GM12878 (cell line): ENCODE measurements at regions of chr2 and their contacts with region 1.

Region 1: GRCh38 chr2:181667234-181667633 is 10.3 kb upstream of the CERKL start:
- DNase-seq: no peak
- ATAC-seq: no peak
- H3K4me3 ChIP-seq: no peak overlapping the region
- H3K27ac ChIP-seq: no peak overlapping the region
- H3K4me1 ChIP-seq: peaks cover 2% of the 10 kb centered on the region
- H3K27me3 ChIP-seq: no peaks in the 10 kb centered on the region
- CTCF ChIP-seq: no peak
- EP300 ChIP-seq: no peak
- POLR2A ChIP-seq: no peak
- RAD21 ChIP-seq: no peak

Region 2: GRCh38 chr2:181552808-181553207 is 114.4 kb before region 1 on chr2:
- CTCF ChIA-PET with region 1: no interaction called
- POLR2A ChIA-PET with region 1: no interaction called
- RAD21 ChIA-PET with region 1: no interaction called
- SMC1A ChIA-PET with region 1: no interaction called
- in situ Hi-C with region 1: no loop called
- intact Hi-C with region 1: no loop called
- DNase-seq: no peak
- ATAC-seq: no peak
- H3K4me3 ChIP-seq: no peak overlapping the region
- H3K27ac ChIP-seq: no peak overlapping the region
- H3K4me1 ChIP-seq: no peaks in the 10 kb centered on the region
- H3K27me3 ChIP-seq: no peaks in the 10 kb centered on the region
- CTCF ChIP-seq: no peak
- EP300 ChIP-seq: no peak
- POLR2A ChIP-seq: no peak
- RAD21 ChIP-seq: no peak

Region 3: DNA sequence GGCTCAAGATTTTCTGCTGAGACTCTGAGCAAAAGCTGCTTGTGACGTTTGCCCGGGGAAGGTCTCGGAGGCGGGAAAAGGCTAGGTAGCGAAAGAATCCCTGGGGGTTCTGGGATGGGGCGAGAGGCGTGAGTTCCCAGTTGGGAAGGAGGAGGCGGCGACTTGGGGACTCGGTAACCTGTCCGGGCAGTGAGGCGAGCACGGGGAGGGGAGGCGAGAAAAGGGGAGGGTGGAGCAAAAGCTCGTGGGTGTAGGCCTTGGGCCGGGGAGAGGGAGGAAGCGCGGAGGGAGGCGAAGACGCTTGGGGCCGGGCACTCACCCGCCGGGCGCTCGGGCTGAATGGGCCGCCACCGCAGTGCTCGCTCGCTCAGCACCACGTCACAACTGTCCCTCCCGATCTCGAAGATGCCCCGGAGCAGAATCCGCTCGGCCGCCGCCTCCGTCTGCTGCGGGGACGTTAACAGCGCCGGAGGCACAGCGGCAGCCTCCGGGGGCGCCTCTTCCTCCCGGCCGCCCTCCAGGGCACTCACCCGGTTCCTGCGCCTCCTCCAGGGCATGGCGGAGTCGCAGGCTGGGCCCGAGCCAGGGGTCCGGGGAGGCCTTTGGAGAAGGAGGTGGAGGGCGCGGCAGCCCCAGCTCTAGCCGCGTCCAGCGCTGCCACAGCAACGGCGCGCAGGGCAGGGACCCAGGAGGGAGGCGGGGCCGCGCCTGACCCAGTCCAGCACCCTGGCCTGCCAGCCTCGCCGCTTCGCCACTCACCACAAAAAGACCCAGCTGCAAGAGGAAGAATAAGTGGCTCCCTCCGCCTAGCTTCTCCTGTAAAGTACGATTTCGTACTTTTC is 10.6 kb before region 1 on chr2 and contains the start of gene CERKL:
- CTCF ChIA-PET with region 1: interaction called, 11 read pairs
- POLR2A ChIA-PET with region 1: no interaction called
- RAD21 ChIA-PET with region 1: no interaction called
- SMC1A ChIA-PET with region 1: interaction called, 11 read pairs
- in situ Hi-C with region 1: no loop called
- intact Hi-C with region 1: no loop called
- DNase-seq: no peak
- ATAC-seq: peak; percentile 85
- H3K4me3 ChIP-seq: peak within 1 kb of the TSS; percentile 55
- H3K27ac ChIP-seq: no peak within 1 kb of the TSS
- H3K4me1 ChIP-seq: no peaks in the 10 kb centered on the region
- H3K27me3 ChIP-seq: peaks cover 9 to 12% of the 10 kb centered on the region in 2 experiments; a peak in 3 of 4 replicates
- CTCF ChIP-seq: no peak
- EP300 ChIP-seq: no peak
- POLR2A ChIP-seq: no peak
- RAD21 ChIP-seq: no peak
- polyA plus RNA-seq, gene CERKL: 19.1 to 23.0 TPM

Region 4: GRCh38 chr2:181682795-181683517 is 15.7 kb after region 1 on chr2:
- CTCF ChIA-PET with region 1: no interaction called
- POLR2A ChIA-PET with region 1: no interaction called
- RAD21 ChIA-PET with region 1: no interaction called
- SMC1A ChIA-PET with region 1: no interaction called
- in situ Hi-C with region 1: no loop called
- intact Hi-C with region 1: no loop called
- DNase-seq: no peak
- ATAC-seq: no peak
- H3K4me3 ChIP-seq: no peak overlapping the region
- H3K27ac ChIP-seq: no peak overlapping the region
- H3K4me1 ChIP-seq: no peaks in the 10 kb centered on the region
- H3K27me3 ChIP-seq: peaks cover 18 to 49% of the 10 kb centered on the region in 2 experiments
- CTCF ChIP-seq: no peak
- EP300 ChIP-seq: no peak
- POLR2A ChIP-seq: no peak
- RAD21 ChIP-seq: no peak